Cardiac septum (tissue), 1 donor: ENCODE measurements at regions of chr2 and their contacts with region 1.

Region 1: GRCh38 chr2:74715078-74715791 is 61.2 kb downstream of the SEMA4F start:
- DNase-seq: peak; percentile 93

Region 2: DNA sequence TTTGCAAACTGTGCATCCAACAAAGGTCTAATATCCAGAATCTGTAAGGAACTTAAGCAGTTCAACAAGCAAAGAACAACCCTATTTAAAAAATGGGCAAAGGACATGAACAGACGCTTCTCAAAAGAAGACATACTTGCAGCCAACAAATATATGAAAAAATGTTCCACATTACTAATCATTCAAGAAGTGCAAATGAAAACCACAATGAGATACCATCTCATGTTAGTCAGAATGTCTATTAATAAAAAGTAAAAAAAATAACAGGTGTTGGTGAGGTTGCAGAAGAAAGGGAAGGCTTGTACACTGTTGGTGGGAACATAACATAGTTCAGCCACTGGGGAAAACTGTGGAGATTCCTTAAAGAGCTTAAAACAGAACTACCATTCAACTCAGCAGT is 1199.2 kb before region 1 on chr2:
- intact Hi-C with region 1: no loop called
- DNase-seq: no peak

Region 3: DNA sequence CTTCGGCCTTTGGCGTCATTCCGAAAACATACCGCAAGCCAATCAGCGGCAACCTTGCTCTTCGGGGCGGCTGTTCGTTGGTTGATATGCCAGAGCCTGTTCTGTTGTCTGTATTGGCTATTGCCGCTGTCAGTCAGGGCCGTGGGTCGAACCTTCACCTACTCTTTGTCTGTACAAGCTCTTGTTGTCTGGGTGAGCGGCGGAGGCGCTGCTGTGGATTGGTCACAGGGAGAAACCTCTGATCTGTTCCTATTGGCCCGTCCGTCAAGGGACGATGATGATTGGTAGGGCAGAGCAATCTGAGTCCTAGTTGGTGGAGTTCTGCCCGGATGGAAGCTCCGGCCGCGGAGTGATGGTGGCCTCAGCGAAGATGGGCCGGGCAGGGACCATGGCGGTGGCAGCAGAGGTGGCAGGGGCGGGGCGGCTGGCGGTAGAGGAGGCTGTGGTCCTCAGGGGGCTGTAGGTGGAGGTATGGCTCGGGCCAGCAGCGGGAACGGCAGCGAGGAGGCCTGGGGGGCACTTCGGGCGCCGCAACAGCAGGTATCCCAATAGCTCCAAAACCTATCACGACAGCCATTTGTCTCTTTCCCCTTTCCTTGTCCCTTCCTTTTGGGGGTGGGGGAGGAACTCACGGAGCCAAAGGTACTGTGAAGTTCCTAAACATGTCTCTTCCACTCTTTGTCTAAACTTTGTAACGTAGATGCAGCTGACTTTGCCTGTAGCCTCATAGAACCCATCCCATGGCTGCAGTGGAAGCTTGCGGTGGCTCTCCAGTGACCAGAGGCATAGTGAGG is 256.9 kb before region 1 on chr2 and contains the start of gene WBP1:
- intact Hi-C with region 1: no loop called
- DNase-seq: peak; percentile 100
- total RNA-seq, gene WBP1: 47.7 TPM

Region 4: DNA sequence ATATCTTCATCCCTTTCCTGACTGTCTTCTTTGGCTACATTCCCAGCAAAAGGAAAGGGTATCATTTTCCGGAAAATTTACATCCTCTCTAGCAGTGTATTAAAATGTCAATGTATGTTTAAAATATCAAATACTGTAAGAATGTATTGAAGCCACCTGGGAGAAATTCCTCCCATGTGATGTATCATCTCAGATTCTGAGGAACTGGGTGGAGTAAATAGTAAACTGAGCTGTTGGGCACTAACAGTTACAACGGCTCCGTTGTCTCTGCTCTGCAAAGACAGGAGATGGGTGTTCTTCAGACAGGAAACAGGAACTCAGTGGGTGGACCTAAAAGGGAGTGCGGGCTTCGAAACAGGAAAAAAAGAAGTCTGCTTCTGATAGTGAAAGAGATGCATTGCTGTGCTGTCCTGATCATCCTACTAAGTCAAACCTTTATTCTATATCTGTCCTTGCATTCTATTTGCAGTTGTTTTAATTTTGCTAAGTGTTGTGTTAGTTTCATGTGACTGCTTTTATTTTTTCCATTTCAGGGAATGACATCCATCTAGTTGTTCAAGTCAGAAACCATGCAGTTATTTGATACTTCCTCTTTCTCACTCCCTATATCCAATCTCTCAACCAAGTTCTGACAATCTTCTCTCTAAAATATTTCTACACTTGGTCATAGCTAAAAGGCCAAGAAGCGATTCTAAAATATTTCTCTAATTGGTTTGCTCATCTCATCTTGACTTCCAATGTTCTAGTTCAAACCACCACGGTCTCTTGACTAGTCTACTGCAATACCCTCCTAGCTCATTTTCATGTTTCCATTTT is 141.3 kb before region 1 on chr2:
- intact Hi-C with region 1: no loop called
- DNase-seq: no peak

Region 5: DNA sequence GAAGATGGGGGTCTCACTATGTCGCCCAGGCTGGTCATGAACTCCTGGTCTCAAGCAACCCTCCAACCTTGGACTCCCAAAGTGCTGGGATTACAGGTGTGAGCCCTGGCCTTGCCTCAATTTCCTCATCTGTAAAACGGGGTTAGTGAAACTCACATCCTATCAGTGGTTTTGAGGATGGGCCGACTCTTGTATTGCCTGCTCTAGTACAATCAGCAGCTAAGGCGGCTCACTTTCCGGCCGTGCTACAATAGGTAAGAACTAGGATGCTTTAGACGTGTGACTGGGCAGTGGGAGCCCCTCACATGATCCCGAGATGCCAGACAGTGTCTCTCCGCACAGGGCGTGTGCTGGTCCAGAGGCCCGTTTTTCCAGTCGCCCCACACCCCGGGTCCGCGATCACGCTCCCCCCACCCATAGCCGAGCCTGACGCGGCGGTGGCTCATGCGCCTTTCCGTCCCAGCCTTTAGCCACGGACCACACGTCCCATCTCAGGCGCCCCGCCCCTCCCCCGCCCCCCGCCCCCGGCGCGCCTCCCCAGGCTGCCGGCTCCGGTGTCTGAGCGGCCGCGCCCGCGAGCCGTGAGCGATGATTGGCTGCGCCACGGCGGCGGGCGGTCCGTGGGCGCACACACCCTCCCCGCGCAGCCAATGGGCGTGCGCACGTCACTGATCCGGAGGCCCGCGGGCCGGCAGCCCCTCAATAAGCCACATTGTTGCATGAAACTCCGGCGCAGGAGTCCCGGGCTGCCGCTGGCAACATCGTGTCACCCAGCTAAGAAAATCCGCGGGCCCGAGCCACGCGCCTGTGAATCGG is 118.4 kb after region 1 on chr2 and contains the start of gene HK2:
- intact Hi-C with region 1: loop called (anchors 5 kb)
- DNase-seq: peak; percentile 93
- total RNA-seq, gene HK2: 15.5 TPM